G401 (cell line): ENCODE measurements at regions of chr11 and their contacts with region 1.

Region 1: GRCh38 chr11:46210133-46210636 is 67.3 kb upstream of the CREB3L1 start:
- DNase-seq: no peak

Region 2: GRCh38 chr11:45872513-45873356 is 337.4 kb before region 1 on chr11:
- in situ Hi-C with region 1: loop called (anchors 25 kb)
- DNase-seq: peak; percentile 93

Region 3: GRCh38 chr11:45917623-45918330 is 292.4 kb before region 1 on chr11 and contains the start of gene PEX16:
- in situ Hi-C with region 1: no loop called
- DNase-seq: peak; percentile 98
- total RNA-seq, gene PEX16: 32.5 and 38.8 TPM in 2 replicates

Region 4: GRCh38 chr11:46039990-46040389 is 170.2 kb before region 1 on chr11:
- in situ Hi-C with region 1: no loop called
- DNase-seq: no peak

Region 5: DNA sequence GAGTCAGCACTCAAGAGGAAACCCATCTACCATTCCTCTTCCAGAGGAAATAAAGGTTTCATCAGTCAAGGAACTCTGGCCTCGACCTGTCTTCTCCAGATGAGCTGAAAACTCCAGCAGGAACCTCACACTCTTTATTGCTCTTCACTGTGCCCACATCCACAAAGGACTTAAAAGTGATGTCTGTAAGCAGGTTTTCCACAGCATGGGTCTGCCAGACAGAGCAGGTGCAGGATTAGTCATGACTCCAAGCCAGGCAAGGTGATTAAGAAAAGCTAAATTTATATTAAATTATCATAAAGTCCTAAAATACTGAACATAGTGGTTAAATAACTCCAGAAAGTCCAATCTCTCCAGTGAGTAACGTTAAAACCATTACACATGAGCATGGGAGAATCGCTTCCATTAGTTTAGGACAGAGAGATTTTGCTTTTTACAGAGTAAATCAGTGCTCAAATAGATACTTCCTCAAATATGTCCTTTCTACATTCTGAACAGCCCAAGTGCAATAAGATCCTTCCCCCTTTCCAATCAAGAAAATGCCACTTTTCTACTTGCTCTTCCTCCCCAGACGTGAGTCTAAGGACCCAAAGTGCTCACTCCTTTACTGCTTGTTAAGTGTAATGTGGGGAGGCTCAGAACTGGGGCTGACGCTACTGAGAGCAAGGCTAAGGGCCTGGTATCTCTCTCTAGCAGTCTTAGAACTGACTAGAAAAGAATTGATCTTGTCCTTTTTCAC is 646.6 kb after region 1 on chr11:
- in situ Hi-C with region 1: no loop called
- DNase-seq: no peak